Activated naive CD4-positive, alpha-beta T cell treated with anti-CD3 and anti-CD28 coated beads for 36 hours (primary cell): ENCODE measurements at regions of chr11 and their contacts with region 1.

Region 1: GRCh38 chr11:75768112-75768908 is at the start of gene DGAT2:
- DNase-seq: peak; percentile 77
- H3K4me3 Mint-ChIP-seq: peak within 1 kb of the TSS; percentile 64
- H3K27ac Mint-ChIP-seq: no peak within 1 kb of the TSS
- H3K4me1 Mint-ChIP-seq: peaks cover 24% of the 10 kb centered on the region
- H3K27me3 Mint-ChIP-seq: peaks cover 4% of the 10 kb centered on the region
- total RNA-seq, gene DGAT2: 3.4 to 4.2 TPM

Region 2: DNA sequence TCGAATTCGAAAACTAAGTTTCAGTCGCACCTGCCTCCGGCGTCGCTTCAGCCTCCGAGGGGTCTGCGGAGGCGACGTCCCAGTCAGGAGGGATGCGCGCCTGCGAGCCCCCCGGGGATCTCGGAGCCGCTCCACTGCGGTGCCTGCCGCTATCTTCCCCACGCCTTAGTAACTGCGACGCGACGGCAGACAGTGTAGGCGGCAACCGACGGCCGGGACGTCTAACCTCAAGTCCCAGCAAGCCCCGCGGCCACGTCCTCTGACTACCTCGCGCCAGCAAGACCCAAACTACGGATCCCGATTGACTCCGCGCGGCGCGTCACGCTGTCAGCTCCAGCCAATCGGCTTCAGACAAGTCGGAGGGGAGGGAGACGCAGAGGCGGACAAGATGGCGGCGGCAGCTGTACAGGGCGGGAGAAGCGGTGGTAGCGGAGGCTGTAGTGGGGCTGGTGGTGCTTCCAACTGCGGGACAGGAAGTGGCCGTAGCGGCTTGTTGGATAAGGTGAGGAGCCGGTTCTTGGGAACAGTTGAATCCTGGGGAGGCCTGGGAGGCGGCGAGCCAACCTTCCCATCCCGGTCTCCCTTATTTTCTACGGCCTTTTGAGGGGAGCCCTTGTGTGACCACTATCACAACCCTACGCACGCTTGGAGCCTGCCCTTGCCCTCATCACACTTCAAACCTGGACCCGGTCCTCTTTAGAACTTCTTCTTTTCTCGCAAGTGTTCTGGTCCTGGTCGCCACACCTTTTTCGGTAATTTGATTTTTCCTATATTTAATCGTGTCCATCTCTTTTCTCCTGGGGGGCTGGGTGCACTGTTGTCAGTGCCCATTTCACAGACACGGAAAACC is 819.2 kb before region 1 on chr11 and contains the starts of genes SPCS2 and XRRA1:
- CTCF ChIA-PET with region 1: no interaction called
- intact Hi-C with region 1: no loop called
- DNase-seq: peak; percentile 100
- H3K4me3 Mint-ChIP-seq: peak within 1 kb of the TSS; percentile 98
- H3K27ac Mint-ChIP-seq: peak within 1 kb of the TSS; percentile 89
- H3K4me1 Mint-ChIP-seq: peaks cover 36% of the 10 kb centered on the region
- H3K27me3 Mint-ChIP-seq: no peaks in the 10 kb centered on the region
- total RNA-seq, gene SPCS2: 77.6 to 83.3 TPM
- total RNA-seq, gene XRRA1: 5.0 to 9.5 TPM

Region 3: GRCh38 chr11:75582895-75583717 is 185.2 kb before region 1 on chr11:
- CTCF ChIA-PET with region 1: no interaction called
- intact Hi-C with region 1: loop called (anchors 5 kb)
- DNase-seq: peak; percentile 68
- H3K4me3 Mint-ChIP-seq: peak overlapping the region; percentile 72
- H3K27ac Mint-ChIP-seq: peak overlapping the region; percentile 64
- H3K4me1 Mint-ChIP-seq: peaks cover 13% of the 10 kb centered on the region
- H3K27me3 Mint-ChIP-seq: no peaks in the 10 kb centered on the region